ENCODE measurements at regions of chr10 and their contacts with region 1.

Region 1: DNA sequence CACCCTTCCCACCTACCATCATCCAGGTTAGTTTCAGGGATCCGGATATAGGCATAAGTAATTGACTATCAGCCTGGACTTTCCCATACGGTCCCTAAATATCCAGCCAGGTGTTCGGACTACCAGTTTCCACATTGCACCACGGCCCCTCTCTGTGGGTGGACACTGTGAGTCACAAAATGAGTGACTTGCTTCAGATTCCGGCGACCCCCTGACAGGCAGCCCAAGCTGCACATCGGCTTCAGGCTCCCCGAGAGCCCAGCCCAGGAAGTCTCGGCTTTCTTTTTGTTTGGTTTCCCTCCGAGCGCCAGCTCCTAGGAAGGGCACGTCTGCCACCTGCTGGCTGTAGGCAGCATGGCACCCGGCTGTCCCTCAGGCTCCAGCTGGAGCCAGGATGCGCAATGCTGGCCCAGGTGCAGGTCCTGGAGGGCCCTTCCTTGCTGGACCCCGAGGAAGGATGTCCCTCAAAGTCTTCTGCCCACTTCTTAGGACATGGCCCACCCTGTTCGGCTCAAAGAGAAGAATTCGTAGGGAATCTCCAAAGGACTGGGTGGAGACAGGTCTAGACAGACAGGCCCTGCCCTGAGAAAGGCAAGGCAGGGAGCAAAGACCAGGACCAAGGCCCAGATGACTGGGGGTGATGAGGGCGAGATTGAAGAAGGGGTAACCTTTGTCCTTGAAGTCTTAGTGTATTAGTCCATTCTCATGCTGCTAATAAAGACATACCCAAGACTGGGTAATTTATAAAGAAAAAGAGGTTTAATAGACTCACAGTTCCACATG is 10.6 kb downstream of the HABP2 start:
- DNase-seq: peak; percentile 47 to 91
- H3K4me3 ChIP-seq: no peak overlapping the region
- H3K27ac ChIP-seq: no peak overlapping the region
- H3K4me1 ChIP-seq: peaks cover 2 to 13% (median 9%) of the 10 kb centered on the region in 4 experiments; a peak in 6 of 7 replicates
- H3K27me3 ChIP-seq: peaks cover 44 to 53% (median 47%) of the 10 kb centered on the region in 4 experiments
- CTCF ChIP-seq: peak; percentile 95 to 97 (median 97)
- EP300 ChIP-seq: no peak
- POLR2A ChIP-seq: no peak
- RAD21 ChIP-seq: peak; percentile 97 to 98

Region 2: GRCh38 chr10:113410618-113411017 is 152.9 kb before region 1 on chr10:
- CTCF ChIA-PET with region 1: no interaction called
- POLR2A ChIA-PET with region 1: no interaction called
- DNase-seq: no peak
- H3K4me3 ChIP-seq: no peak overlapping the region; a peak in 2 of 8 replicates
- H3K27ac ChIP-seq: no peak overlapping the region
- H3K4me1 ChIP-seq: peaks cover 8 to 17% (median 14%) of the 10 kb centered on the region in 4 experiments
- H3K27me3 ChIP-seq: no peaks in the 10 kb centered on the region; a peak in 2 of 7 replicates
- CTCF ChIP-seq: no peak
- EP300 ChIP-seq: no peak
- POLR2A ChIP-seq: no peak
- RAD21 ChIP-seq: no peak

Region 3: GRCh38 chr10:113543107-113543955 is 20.2 kb before region 1 on chr10:
- CTCF ChIA-PET with region 1: interaction called, 14 read pairs
- POLR2A ChIA-PET with region 1: no interaction called
- DNase-seq: no peak
- H3K4me3 ChIP-seq: no peak overlapping the region
- H3K27ac ChIP-seq: no peak overlapping the region
- H3K4me1 ChIP-seq: no peaks in the 10 kb centered on the region
- H3K27me3 ChIP-seq: peaks cover 0 to 6% (median 4%) of the 10 kb centered on the region in 4 experiments; a peak in 4 of 7 replicates
- CTCF ChIP-seq: no peak
- EP300 ChIP-seq: no peak
- POLR2A ChIP-seq: no peak
- RAD21 ChIP-seq: no peak

Region 4: DNA sequence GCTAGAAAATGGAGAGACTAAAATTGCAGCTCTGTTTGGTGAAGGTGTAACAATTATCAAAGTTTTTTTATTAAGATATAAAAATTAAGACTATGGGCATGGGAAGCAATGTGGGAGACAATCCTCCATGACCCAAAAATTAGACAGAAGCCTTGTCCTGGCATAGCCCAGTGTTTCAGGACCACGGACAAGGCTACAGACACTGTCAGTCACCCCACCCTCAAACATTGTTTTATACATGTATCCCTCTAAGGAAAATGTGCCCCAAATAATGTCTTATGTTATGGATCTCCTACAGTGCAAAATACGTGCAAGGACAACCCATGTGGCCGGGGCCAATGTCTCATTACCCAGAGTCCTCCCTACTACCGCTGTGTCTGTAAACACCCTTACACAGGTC is 13.4 kb after region 1 on chr10:
- CTCF ChIA-PET with region 1: interaction called, 13 read pairs
- POLR2A ChIA-PET with region 1: no interaction called
- DNase-seq: peak in 1 of 2 experiments; percentile 53
- H3K4me3 ChIP-seq: no peak overlapping the region
- H3K27ac ChIP-seq: no peak overlapping the region
- H3K4me1 ChIP-seq: no peaks in the 10 kb centered on the region; a peak in 1 of 7 replicates
- H3K27me3 ChIP-seq: no peaks in the 10 kb centered on the region; a peak in 4 of 7 replicates
- CTCF ChIP-seq: no peak
- EP300 ChIP-seq: no peak
- POLR2A ChIP-seq: no peak
- RAD21 ChIP-seq: no peak

Measured in H1 (cell line).